ENCODE measurements at regions of chr16 and their contacts with region 1.

Region 1: DNA sequence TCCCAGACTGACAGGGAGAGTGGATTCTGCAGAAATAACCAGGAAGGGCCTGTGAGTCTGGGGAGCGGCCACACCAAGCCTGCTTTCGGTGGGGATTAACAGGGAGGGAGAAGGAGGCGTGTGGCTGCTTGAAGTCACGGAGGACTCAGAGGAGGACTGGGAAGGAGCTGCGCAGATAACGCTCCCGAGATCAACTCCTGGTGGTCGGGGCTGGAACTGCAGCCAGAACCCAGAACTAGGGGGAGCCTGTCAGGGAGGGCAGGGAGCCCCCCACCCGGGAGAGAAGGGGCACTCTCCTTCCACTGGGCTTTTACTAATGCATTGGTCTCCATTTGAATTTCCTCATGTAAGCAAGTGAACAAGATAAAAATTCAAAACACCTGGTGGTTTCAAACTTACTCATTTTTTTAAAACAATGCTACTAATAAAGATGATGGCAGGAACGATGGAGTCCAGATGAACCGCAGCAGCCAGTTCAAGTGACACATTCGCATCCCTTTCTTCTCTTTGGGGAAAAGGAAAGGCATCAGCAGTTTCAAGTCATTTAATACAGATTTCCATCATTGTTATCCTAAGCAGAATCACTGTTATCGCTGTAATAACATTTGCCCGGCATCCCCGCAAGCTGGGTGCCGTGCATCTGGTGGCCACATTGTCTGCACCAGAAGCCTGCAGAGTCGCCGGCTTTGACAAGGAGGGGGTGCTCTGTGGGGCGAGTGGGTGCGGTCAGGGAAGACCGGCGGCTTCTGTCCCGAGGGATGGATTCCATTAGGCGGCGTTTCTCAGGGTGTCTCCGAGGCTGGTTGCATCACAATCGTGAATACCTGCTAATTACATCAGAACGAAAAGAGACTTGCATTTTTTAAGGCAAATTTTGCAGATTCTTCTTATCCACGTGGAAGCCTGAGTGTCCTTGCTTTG is 183.0 kb downstream of the FOXL1 start:
- DNase-seq: peak; percentile 72
- H3K4me3 ChIP-seq: no peak overlapping the region
- H3K27ac ChIP-seq: no peak overlapping the region
- H3K4me1 ChIP-seq: peaks cover 13% of the 10 kb centered on the region
- H3K27me3 ChIP-seq: peaks cover 0 to 8% of the 10 kb centered on the region in 2 experiments
- CTCF ChIP-seq: peak; percentile 91 to 96
- POLR2A ChIP-seq: no peak

Region 2: DNA sequence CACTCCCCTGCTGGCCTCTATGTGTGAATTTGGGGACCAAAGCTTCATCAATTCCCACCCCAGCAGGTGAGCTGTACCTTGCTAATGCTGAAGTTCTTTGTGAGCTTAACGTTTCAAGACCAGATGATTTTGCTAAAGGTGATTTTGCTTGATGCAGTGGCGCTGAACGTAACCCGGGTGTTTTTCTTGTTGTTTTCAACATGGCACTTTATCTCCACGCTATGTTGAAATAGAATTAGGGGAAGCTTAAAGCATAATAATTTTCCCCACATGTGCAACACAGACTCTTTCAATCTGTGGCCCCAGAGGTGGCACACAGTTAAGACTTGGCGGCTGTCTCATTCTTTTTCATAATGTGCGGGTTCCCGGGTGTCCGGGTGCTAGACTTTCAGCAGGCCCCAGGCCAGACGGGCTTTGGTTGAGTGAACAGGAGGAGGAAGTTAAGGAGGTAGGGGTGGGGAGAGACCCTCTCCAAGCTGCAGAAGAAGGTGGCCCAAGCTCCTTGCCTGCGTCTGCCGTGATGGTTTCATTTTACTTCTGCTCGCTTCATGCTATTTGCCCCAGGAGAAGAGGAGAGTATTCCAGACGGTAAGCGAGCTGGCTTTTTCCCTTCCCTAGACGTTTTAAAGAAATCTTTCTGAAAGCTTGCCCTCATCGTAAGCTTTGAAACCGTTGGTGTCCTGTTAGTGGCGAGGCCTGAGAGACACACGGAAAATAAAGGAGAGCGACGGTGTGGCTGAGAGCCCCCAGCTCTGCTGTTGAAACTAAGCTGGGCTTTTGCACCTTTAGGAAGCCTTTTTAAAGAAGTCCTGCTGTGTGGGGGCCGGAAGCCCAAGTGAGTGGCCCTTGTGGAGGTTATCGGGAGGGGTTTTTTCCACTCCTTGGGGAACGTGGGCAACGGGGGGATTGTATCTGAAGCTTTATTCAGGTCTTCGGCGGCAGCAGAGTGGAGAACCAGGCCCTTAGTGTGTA is 190.5 kb before region 1 on chr16:
- CTCF ChIA-PET with region 1: interaction called, 22 read pairs
- POLR2A ChIA-PET with region 1: no interaction called
- dilution Hi-C with region 1: no loop called
- intact Hi-C with region 1: loop called (anchors 1 kb)
- DNase-seq: peak; percentile 57
- H3K4me3 ChIP-seq: peak overlapping the region; percentile 88 to 99 (median 94)
- H3K27ac ChIP-seq: peak overlapping the region; percentile 78
- H3K4me1 ChIP-seq: peaks cover 35% of the 10 kb centered on the region
- H3K27me3 ChIP-seq: no peaks in the 10 kb centered on the region
- CTCF ChIP-seq: no peak
- POLR2A ChIP-seq: no peak

Region 3: GRCh38 chr16:86575754-86576557 is 185.4 kb before region 1 on chr16:
- CTCF ChIA-PET with region 1: interaction called, 22 read pairs
- POLR2A ChIA-PET with region 1: no interaction called
- dilution Hi-C with region 1: no loop called
- intact Hi-C with region 1: loop called (anchors 1 kb)
- DNase-seq: peak; percentile 92
- H3K4me3 ChIP-seq: peak overlapping the region; percentile 33 to 67 (median 62)
- H3K27ac ChIP-seq: peak overlapping the region; percentile 82
- H3K4me1 ChIP-seq: peaks cover 56% of the 10 kb centered on the region
- H3K27me3 ChIP-seq: no peaks in the 10 kb centered on the region
- CTCF ChIP-seq: peak; percentile 73 to 74
- POLR2A ChIP-seq: peak; percentile 83

Region 4: DNA sequence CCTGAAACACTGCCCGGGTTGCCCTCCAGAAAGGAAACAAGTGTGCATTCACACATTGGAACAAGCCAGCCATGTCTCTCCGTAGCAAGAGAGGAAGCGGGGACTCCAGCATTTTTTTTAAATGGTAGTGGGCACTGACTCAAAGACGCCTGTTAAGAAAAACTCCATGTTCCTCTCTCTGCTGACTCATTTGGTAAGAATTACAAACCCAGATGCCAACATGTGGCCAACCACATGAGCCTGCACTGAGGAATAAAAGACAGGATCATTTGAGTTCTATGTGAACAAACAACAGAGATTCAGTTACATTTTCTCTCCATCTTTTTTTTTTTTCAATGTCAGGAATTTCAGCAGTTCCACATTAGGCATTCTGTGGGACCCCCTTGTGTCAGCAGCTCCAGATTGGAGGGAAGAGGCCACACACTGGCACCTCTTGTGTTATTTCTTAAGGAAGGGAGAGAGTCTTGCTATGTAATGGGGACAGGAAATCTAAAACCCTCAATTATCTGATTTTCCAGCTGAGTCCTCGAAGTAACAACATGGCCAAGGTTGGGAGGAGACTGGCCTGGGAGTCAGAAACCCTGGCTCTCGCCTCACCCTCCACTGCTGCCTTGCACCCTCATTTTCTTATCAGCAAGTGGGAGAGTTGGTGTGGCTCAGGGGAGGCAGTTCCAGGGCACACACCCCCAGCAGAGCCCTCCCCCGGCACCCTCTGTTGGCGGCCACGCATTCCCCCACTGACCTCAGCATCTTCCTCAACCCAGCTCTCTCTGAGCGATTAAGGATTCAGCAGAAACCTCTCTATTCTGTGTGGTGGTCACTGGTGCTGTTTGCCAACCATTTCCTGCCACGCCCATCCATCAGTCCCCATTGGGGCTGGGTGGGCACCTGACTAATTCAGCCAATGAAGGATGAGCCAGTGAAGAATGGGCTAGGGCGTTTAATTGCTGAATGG is 10.0 kb before region 1 on chr16:
- CTCF ChIA-PET with region 1: interaction called, 10 read pairs
- POLR2A ChIA-PET with region 1: no interaction called
- dilution Hi-C with region 1: no loop called
- intact Hi-C with region 1: no loop called
- DNase-seq: peak; percentile 86
- H3K4me3 ChIP-seq: no peak overlapping the region
- H3K27ac ChIP-seq: peak overlapping the region; percentile 85
- H3K4me1 ChIP-seq: peaks cover 13% of the 10 kb centered on the region
- H3K27me3 ChIP-seq: no peaks in the 10 kb centered on the region
- CTCF ChIP-seq: no peak
- POLR2A ChIP-seq: no peak